HEK293T (cell line): ENCODE measurements at regions of chr7 and their contacts with region 1.

Region 1: DNA sequence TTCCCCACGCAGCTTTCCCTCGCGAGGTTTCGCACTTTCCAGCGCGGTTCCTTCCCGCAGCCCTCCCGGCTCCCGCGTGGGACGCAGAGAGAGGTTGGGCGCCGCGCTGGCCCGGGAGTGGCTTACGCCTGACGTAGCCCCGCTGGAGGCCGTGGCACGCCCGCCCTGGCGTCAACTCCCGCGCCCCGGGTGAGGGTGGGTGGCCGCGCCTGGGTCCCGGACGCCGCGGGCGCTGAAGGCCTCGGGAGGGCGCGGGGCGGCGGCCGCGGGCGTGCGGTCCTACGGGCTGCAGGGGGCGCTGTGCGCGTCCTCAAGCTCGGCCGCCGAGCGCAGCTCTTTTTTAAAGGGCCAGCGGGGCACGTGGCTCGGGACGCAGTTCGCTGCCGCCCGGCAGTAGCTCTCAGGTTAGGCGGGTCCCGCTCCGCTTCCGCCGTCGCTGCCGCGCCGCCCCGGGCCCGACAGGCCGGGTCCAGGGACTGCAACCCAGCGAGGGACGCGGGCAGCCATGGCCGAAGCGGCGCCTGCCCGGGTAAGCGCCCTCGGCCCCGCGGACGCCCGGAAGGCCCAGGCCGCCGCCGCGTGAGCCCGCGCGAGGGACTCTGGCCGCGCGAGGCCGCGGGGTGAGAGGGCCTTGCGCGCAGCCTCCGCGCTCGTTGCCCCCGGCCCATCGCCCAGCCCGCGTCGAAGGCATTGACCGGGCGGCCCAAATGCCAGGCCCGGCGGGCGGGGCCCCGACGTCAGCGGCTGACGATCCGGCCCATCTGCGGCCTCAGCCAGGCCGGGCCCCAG is at the start of gene ZNF783:
- DNase-seq: peak; percentile 98

Region 2: DNA sequence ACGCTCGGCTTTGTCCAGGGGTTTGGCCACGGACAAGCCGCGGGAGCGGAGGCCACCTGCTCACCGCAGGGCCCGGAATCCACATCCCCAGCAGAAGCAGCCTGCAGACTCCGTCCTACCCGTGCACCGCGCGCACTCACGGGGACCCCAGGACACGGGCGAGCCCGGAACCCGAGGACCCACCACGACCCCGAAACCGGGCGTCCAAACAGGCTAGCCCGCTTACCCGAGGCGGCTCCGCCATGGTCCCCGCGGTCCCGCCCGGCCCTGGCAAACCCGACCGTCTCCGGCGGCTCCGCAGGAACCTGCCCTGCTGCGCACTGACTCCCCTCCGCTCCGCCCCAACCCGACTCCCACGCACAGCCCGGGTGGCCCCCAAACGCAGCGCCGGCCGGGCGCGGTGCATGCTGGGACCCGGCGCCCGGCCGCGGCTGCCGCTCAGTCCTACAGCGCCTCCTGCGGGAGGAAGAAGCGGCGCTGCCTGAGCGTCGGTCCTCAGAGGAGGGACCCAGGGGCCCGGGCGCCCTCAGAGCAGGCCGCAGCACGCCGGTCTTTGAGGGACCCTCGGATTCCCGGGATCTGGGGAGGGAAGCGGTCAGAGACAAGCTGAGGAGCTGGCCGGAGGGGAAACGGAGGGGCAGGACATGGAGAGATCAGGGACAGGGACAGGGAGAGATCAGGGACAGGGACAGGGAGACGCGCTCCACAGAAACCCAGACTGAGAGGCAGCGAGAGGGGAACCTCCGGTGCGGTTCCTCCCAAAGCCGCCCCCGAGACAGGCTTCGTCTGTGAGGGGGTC is 171.4 kb before region 1 on chr7 and contains the start of gene ZNF786:
- CTCF ChIA-PET with region 1: no interaction called
- POLR2A ChIA-PET with region 1: no interaction called
- DNase-seq: peak; percentile 97

Region 3: DNA sequence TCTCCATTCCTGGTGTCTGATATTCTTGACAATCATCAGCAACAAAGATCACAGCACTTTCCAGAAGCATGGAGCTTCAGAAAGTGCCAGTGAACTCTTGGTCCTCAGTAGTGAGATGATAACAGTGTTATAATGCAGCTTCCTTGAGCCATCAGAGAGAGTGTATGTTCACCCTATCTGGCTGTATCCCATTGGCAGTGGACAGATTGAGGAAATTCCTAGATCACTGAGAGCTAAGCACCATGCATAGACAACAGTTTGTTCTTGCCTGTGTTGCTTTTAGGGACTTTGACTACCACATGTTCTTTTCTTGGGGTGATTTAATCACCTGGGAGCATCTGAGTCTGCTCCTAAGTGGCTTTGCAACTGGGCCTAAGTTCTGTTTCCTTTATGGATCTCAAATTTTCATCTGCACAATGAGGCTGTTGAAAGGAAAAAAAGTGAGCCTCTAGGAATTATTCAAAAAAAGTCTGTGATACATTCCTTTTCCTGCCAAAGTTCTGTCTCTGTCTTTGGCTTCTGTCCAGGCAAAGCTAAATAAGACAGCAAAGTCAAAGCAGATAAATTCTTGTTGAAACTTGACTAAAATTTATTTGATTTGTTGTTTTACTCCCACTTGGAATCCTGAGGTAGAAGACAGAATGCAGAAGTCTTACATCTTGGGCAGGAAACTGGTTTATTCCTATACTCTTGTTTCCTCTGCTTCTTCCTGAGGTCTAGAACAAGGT is 81.1 kb before region 1 on chr7:
- CTCF ChIA-PET with region 1: no interaction called
- POLR2A ChIA-PET with region 1: no interaction called
- DNase-seq: no peak

Region 4: GRCh38 chr7:149284850-149285626 is 23.0 kb after region 1 on chr7:
- CTCF ChIA-PET with region 1: interaction called, 14 read pairs
- POLR2A ChIA-PET with region 1: interaction called, 24 read pairs
- DNase-seq: peak; percentile 100